ENCODE measurements at regions of chr10 and their contacts with region 1.

Region 1: GRCh38 chr10:72692057-72692910 is at the start of gene MCU:
- DNase-seq: peak; percentile 84 to 98
- H3K4me3 ChIP-seq: peak within 1 kb of the TSS; percentile 94 to 97
- H3K27ac ChIP-seq: peak within 1 kb of the TSS; percentile 92 to 94
- H3K4me1 ChIP-seq: peaks cover 0 to 21% of the 10 kb centered on the region in 2 donors
- H3K27me3 ChIP-seq: no peaks in the 10 kb centered on the region
- CTCF ChIP-seq: no peak
- total RNA-seq, gene MCU: 22.0 TPM

Region 2: GRCh38 chr10:72625608-72626443 is 66.5 kb before region 1 on chr10 and contains the start of gene MICU1:
- intact Hi-C with region 1: loop called (anchors 1 kb)
- DNase-seq: peak; percentile 91 to 98
- H3K4me3 ChIP-seq: peak within 1 kb of the TSS; percentile 79 to 95
- H3K27ac ChIP-seq: peak within 1 kb of the TSS; percentile 82 to 91
- H3K4me1 ChIP-seq: peaks cover 3 to 8% of the 10 kb centered on the region in 2 donors
- H3K27me3 ChIP-seq: no peaks in the 10 kb centered on the region
- CTCF ChIP-seq: no peak
- total RNA-seq, gene MICU1: 18.9 TPM

Region 3: DNA sequence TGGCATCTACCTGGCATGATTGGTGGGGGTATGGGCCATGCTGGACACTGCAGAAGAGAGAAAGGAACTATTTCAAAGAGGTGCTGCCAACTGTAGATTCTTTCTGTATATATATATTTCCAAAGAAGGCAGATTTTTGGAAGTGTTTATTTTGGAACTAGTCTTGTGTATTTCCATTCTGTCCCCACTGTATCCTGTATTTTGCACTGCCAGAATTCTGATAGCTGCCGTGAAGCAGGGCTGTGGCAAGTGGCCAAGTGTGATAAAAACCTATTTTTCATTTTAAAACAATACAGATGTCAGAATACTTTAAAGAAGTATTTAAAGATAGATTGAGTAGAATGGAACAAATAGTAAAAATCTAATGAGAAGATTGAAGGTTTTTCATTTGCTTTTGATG is 16.8 kb after region 1 on chr10:
- intact Hi-C with region 1: loop called (anchors 2 kb)
- DNase-seq: no peak
- H3K4me3 ChIP-seq: peak overlapping the region in 1 of 2 donors; percentile 41
- H3K27ac ChIP-seq: peak overlapping the region; percentile 74 to 86
- H3K4me1 ChIP-seq: peaks cover 6 to 40% of the 10 kb centered on the region in 2 donors
- H3K27me3 ChIP-seq: no peaks in the 10 kb centered on the region
- CTCF ChIP-seq: no peak

Region 4: DNA sequence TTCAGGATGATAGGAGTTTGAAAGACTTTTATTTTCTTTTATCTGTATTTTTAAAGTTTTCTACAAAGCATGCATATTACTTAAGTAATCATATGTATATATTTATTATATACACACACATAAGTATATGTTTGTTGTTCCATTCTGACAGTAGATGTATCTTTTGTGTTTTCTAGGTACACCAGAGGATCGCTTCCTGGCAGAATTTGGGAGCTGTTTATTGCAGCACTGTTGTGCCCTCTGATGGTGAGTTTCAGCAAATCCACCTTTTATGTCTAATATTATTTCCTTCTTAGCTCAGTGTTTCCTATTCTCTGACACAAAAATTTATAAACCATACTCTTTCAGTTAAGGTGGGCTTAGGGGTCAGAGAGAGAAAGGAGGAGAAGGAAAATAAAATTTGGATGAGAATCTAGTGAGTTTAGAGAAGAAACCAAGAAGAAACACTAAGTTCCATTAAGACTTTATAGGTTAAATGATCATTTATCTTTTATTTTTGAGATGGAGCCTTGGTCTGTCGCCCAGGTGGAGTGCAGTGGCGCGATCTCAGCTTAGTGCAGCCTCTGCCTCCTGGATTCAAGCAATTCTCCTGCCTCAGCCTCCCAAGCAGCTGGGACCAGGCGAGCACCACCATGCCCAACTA is 142.0 kb after region 1 on chr10:
- intact Hi-C with region 1: loop called (anchors 2 kb)
- DNase-seq: peak in 1 of 2 donors; percentile 66
- H3K4me3 ChIP-seq: no peak overlapping the region
- H3K27ac ChIP-seq: no peak overlapping the region
- H3K4me1 ChIP-seq: peaks cover 0 to 3% of the 10 kb centered on the region in 2 donors
- H3K27me3 ChIP-seq: no peaks in the 10 kb centered on the region
- CTCF ChIP-seq: peak; percentile 53 to 70 (median 63)

Measured in ascending aorta (tissue), 2 donors.